Activated B cell treated with CpG ODN at 0.5 μM for 24 hours (primary cell): ENCODE measurements at regions of chr18 and their contacts with region 1.

Region 1: DNA sequence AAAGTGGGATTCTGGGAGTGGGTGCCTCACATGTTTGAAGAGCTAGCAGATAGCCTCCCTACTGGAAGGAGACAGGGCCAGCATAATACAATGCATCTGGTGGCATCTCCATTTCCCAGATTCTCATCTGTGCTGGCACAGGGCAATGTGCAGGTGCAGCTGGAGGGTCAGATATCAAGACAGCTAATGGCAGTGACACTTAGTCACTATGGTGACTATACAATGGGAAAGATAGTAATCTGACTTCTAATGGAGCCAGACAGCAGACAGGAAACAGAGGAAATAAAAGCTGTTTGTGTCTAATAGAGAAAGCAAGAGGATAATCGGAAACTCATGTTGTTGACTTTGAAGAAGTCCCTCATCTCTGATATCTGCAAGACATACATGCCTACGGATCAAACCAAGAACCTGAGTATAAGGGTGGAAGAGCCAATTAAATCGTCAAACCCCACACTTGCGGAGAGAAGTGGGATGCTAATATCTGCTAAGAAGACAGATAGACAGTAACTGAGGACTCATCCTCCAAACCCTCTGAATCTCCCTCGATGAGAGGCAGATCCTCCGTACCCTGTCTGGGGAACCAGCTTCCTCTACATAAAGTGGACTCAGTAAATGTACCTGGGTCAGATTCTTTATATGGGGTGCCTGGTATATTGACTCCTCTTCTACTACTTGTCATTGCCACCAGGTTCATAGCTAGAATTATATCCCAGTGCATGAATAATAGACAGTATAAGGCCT is 692.7 kb downstream of the SOCS6 start:
- DNase-seq: no peak
- ATAC-seq: no peak
- H3K4me3 Mint-ChIP-seq: no peak overlapping the region
- H3K27ac Mint-ChIP-seq: no peak overlapping the region
- H3K4me1 Mint-ChIP-seq: no peaks in the 10 kb centered on the region
- H3K27me3 Mint-ChIP-seq: no peaks in the 10 kb centered on the region
- CTCF ChIP-seq: no peak

Region 2: DNA sequence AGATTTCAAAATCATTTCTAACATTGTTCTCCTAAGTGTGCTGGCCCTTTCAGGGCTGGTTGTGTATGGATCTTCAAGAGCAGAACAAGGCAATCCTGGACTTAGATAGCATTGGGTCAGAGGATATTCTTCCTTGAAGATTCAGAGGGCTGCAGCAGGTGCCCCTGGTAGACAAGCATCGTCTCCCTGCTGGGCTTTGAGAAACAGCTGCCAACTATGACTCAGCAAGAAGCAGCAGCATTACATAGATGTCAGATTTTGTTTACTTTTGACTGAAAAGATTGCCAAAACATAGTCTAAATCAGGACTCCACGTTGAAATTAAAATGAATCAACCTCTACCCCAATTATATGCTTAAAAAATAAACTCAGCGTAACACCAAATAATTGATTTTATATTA is 73.9 kb before region 1 on chr18:
- CTCF ChIA-PET with region 1: no interaction called
- POLR2A ChIA-PET with region 1: no interaction called
- intact Hi-C with region 1: no loop called
- DNase-seq: no peak
- ATAC-seq: no peak
- H3K4me3 Mint-ChIP-seq: no peak overlapping the region
- H3K27ac Mint-ChIP-seq: no peak overlapping the region
- H3K4me1 Mint-ChIP-seq: no peaks in the 10 kb centered on the region
- H3K27me3 Mint-ChIP-seq: no peaks in the 10 kb centered on the region
- CTCF ChIP-seq: no peak

Region 3: DNA sequence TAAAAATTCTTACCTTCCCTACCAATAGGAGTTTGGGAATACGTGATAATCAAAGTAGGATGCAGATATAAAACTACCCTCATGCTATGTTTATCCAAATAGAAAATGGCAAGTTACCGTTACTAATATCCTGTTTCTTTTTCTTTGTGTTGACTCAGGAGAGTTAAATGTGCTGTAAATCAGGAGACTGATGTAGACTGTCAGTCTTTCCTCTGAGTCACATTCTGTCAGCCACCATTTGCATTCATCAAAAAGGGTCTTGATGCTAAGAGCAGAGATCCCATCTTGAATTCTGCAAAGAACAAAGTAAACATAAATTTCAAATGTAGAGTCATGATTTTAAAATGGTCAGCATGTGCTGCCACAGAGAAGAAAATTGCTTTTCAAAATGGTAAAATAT is 20.0 kb after region 1 on chr18:
- CTCF ChIA-PET with region 1: no interaction called
- POLR2A ChIA-PET with region 1: no interaction called
- intact Hi-C with region 1: loop called (anchors 2 kb)
- DNase-seq: no peak
- ATAC-seq: no peak
- H3K4me3 Mint-ChIP-seq: no peak overlapping the region
- H3K27ac Mint-ChIP-seq: no peak overlapping the region
- H3K4me1 Mint-ChIP-seq: no peaks in the 10 kb centered on the region
- H3K27me3 Mint-ChIP-seq: no peaks in the 10 kb centered on the region
- CTCF ChIP-seq: no peak

Region 4: DNA sequence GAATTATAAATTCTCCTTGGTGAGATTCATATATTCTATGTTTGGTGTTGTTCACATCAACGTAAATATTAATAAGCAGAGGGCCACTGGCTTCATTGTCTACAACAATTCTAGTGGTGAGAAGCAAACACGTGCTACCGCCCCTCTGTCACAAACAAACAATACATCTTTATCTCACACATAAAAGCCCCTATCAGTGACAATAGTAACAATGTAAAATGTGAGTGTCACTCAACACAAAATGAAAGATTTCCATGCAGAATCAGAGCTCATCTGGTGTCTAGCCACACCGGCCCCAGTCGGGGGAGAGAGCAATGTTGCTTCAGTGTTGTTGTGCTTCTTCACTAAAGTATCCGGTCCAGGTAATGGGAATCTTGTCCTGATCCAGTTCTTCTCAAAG is 239.8 kb after region 1 on chr18:
- CTCF ChIA-PET with region 1: no interaction called
- POLR2A ChIA-PET with region 1: no interaction called
- intact Hi-C with region 1: no loop called
- DNase-seq: no peak
- ATAC-seq: no peak
- H3K4me3 Mint-ChIP-seq: no peak overlapping the region
- H3K27ac Mint-ChIP-seq: no peak overlapping the region
- H3K4me1 Mint-ChIP-seq: no peaks in the 10 kb centered on the region
- H3K27me3 Mint-ChIP-seq: no peaks in the 10 kb centered on the region
- CTCF ChIP-seq: no peak